CD4-positive, alpha-beta memory T cell (primary cell): ENCODE measurements at regions of chr19 and their contacts with region 1.

Region 1: GRCh38 chr19:21396893-21397572 is at the start of gene ZNF493:
- DNase-seq: peak; percentile 92 to 95 (median 92)
- H3K4me3 ChIP-seq: peak within 1 kb of the TSS; percentile 10 to 76
- H3K4me3 Mint-ChIP-seq: peak within 1 kb of the TSS; percentile 85 to 99 (median 97)
- H3K27ac ChIP-seq: peak within 1 kb of the TSS; percentile 69
- H3K27ac Mint-ChIP-seq: peak within 1 kb of the TSS; percentile 82 to 96 (median 90)
- H3K4me1 ChIP-seq: peaks cover 19% of the 10 kb centered on the region
- H3K4me1 Mint-ChIP-seq: peaks cover 18 to 44% (median 30%) of the 10 kb centered on the region in 4 donors
- H3K27me3 ChIP-seq: no peaks in the 10 kb centered on the region
- H3K27me3 Mint-ChIP-seq: no peaks in the 10 kb centered on the region
- total RNA-seq, gene ZNF493: 57.4 to 61.7 TPM

Region 2: DNA sequence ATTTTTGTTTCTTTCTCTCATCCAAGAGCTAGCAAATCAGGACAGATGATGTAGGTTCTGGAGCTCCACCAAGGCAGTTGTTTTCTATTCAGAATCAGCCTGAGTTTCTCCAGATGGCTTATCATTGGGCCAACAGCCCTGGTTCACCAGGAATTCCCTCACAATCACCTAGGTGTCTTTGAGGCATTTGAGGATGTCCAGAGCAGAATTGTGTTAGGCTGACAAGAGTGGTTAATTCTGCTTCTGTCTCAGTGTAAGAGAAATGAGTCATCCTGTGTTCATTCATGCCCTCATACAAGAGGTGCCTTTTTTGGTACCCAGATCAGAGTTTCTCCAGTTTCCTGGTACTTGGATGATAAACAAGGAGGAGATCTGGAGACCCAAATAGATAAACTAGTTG is 1217.1 kb before region 1 on chr19:
- CTCF ChIA-PET with region 1: no interaction called
- POLR2A ChIA-PET with region 1: no interaction called
- intact Hi-C with region 1: loop called (anchors 5 kb)
- DNase-seq: no peak
- H3K4me3 ChIP-seq: no peak overlapping the region
- H3K4me3 Mint-ChIP-seq: no peak overlapping the region
- H3K27ac ChIP-seq: no peak overlapping the region
- H3K27ac Mint-ChIP-seq: no peak overlapping the region
- H3K4me1 ChIP-seq: no peaks in the 10 kb centered on the region
- H3K4me1 Mint-ChIP-seq: peaks cover 0 to 5% (median 2%) of the 10 kb centered on the region in 4 donors
- H3K27me3 ChIP-seq: no peaks in the 10 kb centered on the region
- H3K27me3 Mint-ChIP-seq: no peaks in the 10 kb centered on the region

Region 3: DNA sequence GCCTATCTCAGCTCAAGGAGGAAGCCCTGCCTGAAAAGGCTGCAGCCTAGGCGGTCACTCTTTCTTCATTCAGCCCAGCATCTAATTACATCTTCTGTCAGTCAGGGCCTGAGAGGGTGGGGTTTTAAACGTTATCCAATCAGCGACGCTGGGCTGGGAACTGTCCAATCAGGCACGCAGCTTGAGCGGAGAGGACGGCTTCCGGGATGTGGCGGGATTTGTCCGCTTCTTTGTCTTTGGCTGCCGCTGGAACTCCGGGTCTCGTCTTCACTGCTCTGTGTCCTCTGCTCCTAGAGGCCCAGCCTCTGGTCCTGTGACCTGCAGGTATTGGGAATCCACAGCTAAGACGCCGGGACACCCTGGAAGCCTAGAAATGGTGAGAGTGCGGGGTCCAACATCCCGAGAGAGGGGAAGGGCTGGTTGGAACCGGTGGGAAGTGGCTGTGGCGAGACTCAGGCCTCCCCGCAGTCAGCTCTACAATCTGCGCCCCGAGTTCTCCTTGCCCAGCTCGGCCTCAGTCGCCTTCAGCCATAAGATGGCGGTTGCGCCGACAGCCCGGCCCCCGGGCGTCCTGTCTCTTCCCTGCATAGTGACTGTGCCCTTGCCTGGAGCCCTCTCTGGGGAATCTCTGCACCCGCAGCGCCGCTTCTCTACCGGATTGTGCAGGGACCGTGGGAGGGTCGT is 38.1 kb before region 1 on chr19 and contains the start of gene ZNF738:
- CTCF ChIA-PET with region 1: no interaction called
- POLR2A ChIA-PET with region 1: interaction called, 17 read pairs
- intact Hi-C with region 1: loop called (anchors 1 kb)
- DNase-seq: peak; percentile 80 to 87 (median 82)
- H3K4me3 ChIP-seq: peak within 1 kb of the TSS; percentile 67 to 86
- H3K4me3 Mint-ChIP-seq: peak within 1 kb of the TSS; percentile 98 to 100 (median 99)
- H3K27ac ChIP-seq: peak within 1 kb of the TSS; percentile 68
- H3K27ac Mint-ChIP-seq: peak within 1 kb of the TSS; percentile 90 to 98 (median 96)
- H3K4me1 ChIP-seq: peaks cover 8% of the 10 kb centered on the region
- H3K4me1 Mint-ChIP-seq: peaks cover 4 to 14% (median 11%) of the 10 kb centered on the region in 4 donors
- H3K27me3 ChIP-seq: no peaks in the 10 kb centered on the region
- H3K27me3 Mint-ChIP-seq: no peaks in the 10 kb centered on the region
- total RNA-seq, gene ZNF738: 9.8 to 11.4 TPM